Left colon (tissue), 2 donors: ENCODE measurements at regions of chr15 and their contacts with region 1.

Region 1: DNA sequence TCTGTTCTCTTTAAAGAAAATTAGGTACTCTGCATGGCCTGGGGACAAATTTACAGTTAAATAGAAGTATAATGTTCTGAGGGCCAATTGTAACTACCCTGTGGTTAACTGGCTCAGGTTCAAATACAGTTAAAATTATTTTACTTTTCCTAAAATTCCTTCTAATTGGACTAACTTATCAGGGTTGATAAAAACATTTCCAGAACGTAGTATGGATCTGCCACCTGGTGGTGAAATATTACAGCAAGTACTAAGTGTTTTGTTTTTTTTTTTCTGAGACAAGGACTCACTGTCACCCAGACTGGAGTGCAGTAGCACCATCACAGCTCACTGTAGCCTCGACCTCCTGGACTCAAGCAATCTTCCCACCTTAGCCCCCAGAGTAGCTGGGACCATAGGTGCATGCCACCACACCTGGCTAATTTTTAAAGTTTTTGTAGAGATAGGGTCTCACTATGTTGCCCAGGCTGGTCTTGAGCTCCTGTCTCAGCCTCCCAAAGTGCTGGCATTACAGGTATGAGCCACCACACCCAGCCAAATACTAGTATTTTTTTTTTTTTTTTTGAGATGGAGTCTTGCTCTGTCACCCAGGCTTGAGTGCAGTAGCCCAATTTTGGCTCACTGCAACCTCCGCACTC is 29.2 kb downstream of the NEO1 start:
- DNase-seq: no peak
- ATAC-seq: peak; percentile 59

Region 2: DNA sequence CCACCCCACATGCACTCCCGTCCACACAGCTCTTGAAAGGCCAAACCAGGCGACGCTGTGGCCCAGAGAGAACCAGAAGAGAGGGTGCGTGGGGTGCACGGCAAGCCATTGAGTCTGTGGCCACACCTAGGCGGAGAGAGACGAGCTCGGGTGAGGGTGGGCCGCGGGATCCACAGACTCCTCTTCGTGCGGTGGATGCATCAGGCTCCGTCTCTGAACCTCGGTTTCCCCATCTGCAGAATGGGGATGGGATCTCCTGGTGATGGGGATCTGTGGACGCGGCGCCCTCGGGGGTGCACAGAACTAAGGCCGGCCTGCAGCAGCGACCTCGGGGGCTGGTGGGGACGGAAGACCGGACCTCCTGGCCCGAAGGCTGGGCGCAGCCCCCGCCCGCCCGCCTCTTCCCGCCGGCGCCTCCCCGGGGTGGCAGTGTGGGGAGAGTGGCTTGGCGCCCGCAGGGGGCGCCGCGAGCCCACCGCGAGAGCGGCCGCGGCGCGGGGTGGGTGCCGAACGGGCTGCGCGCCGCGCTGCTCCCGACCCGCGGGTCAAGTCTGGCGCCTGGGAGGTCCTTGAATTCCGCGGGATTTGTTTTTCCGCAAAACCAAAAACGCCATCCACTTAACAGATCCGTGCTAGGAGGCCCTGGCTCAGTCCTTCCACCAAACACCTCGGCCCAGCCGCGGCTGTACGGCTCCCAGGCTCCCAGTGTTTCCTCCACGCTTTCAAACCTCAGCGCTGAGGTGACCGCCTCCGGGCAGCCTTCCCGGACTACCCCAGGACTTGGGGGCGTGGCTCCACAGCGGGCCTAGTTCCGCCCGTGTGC is 284.7 kb before region 1 on chr15:
- intact Hi-C with region 1: loop called in 1 of 2 experiments (anchors 5 kb)
- DNase-seq: peak; percentile 60 to 65
- ATAC-seq: peak; percentile 96

Region 3: GRCh38 chr15:72907733-72908132 is 173.7 kb before region 1 on chr15:
- intact Hi-C with region 1: no loop called
- DNase-seq: no peak
- ATAC-seq: no peak

Region 4: GRCh38 chr15:73165844-73166243 is 84.4 kb after region 1 on chr15:
- intact Hi-C with region 1: no loop called
- DNase-seq: no peak
- ATAC-seq: no peak

Region 5: DNA sequence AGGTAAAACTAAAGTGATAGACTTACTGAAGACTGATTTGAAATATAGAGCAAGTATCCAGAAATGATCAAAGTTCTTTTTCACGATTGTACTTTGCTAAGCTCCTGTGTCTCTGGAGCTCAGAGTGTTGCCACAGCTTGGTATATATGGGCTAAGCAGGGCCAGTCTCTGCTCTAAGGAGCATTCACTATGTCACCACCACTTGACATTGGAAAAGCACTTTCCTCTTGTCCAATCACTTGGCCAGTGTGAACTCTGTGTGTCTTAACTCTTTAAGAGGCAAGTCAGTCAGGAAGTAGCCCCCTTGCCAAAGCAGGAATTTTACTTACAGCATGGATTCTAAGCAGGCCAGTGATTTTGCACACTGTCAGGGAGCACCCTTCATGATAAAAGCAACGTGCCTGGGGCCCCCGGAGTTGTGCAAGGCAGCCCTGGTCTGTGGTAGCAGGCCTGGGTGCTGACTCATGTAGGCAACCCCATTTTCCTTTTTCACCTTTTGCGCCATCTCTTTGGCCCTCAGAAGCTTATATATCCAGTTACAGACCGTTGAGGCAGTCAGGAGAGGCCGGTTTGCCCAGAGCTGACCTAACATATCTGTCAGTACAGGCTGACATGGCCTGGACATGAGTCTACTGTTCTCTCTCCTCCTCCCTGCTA is 214.3 kb after region 1 on chr15:
- intact Hi-C with region 1: no loop called
- DNase-seq: no peak
- ATAC-seq: no peak

Region 6: DNA sequence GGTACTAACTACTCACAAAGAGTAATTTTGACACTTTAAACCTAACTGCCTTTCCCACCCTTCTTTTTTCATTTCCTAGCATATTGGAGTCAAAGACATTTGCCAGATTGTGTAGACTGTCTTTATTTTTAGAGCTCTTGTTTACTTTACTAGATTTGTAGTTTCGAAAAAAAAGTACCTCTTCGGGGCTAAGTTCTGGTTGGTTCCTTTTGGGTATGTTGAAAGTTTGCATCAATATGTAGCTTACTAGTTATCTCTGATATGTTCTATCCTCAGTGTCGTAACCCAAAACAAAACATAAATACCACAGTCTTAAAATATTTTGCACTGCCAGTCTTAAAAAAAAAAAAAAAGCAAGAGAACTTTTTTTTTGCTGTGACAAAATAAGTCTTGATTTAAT is 413.7 kb after region 1 on chr15:
- intact Hi-C with region 1: no loop called
- DNase-seq: no peak
- ATAC-seq: no peak